ENCODE measurements at regions of chr19 and their contacts with region 1.

Region 1: DNA sequence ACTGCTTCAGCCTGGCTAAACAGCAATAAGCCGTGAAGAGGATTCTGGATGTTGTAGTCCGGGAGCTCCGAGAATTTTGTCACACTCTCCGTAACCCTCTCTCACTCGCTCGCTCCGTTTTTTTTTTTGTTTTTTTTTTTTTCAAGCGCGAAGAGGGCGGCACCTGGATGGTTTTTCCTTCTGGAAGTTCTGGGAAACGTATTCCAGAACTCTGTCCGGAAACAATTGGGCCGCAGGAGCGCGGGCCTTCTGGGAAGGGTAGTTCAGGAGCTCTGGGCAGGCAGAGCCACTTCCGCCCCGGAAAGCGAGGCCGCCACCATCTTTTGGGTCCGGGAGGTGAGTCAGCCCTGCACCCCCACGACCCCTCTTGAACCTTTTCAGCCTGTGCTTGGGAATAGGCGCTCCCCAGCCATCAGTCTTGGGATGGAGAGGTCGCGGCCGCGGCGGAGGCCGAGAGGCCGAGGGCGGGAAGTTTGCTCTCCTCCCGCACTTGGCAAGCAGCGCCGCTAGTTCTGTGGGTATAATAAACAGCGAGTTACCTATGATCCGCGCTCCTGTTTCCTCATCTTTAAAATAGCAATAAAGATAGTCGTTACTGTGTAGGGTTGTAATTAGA is at the start of gene ZNF227:
- DNase-seq: peak; percentile 71 to 97
- H3K4me3 ChIP-seq: peak within 1 kb of the TSS; percentile 70 to 71
- H3K27ac ChIP-seq: peak within 1 kb of the TSS; percentile 73 to 78
- H3K4me1 ChIP-seq: no peaks in the 10 kb centered on the region
- H3K27me3 ChIP-seq: no peaks in the 10 kb centered on the region
- CTCF ChIP-seq: no peak
- total RNA-seq, gene ZNF227: 7.1 TPM

Region 2: DNA sequence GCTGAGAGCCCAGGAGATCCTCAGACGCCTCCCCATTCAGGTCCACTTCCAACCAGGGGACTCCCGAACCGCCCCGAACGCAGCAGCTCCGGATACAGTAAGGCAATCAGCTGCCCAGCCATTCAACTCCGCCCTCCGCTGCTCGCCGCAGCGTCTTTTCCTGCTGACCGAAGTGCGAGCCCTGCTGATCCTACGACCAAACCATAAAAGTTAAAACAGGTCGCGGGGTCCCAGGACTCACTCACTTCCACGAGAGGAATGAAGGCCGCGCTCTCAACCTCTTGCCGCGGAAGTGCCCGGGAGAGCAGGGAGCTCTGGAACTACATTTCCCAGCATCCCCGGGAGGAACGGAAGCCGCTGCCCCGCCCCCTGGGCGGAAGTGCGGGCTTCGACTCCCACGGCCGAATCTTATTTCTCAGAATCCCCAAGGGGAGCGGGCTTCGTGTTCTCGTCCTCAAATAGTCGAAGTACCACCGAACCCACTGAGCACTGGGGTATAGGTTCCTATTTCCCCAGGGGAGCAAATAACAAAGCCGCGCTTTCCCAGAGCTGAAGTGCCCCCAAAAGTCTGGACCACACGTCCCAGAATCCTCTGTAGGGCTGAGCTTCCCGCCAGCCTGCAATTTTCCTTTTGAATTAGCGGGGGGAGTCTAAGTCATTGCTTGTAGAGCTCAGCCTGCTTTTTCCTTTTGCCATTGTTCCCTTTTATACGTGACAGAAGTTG is 277.2 kb before region 1 on chr19 and contains the start of gene ZNF45:
- intact Hi-C with region 1: loop called (anchors 1 kb)
- DNase-seq: peak; percentile 60 to 95
- H3K4me3 ChIP-seq: peak within 1 kb of the TSS; percentile 76 to 93
- H3K27ac ChIP-seq: peak within 1 kb of the TSS; percentile 77 to 82
- H3K4me1 ChIP-seq: peaks cover 4 to 16% of the 10 kb centered on the region in 2 donors
- H3K27me3 ChIP-seq: no peaks in the 10 kb centered on the region
- CTCF ChIP-seq: no peak
- total RNA-seq, gene ZNF45: 6.5 TPM

Region 3: DNA sequence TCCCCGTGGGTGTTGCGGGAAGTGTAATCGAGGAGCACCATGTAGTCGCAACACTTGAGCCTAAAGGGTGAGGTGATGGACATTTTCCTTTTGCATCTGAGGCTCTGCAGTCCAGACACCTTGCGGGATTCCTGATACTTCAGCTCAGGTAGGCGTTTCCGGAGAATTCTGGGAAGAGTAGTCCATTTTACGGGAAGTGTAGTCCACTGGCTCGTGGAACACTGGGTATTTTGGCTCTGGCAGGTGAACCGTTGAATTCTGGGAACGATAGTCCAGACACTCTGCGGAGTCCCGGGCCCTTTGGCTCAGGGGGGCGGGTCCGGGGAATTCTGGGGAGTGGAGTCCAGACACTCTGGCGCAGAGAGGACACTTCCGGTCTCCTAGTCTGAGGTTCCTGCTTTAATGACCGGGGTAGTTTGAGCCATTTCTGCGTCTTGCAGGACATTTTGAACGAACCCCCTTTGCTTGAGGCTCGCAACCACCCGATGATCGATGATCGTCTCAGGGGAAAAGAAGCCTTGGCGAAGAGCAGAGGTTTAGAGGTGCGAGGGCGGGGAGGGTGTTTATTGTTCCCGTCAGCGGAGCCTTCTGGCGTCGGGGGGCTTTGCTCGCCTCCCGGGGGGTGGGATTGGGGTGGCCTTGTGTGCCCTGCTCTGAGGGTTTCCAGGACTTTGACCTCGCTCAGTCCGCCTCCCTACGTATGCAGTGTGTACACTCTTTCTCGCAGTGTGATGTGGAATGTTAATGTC is 160.5 kb before region 1 on chr19 and contains the start of gene ZNF223:
- intact Hi-C with region 1: loop called (anchors 1 kb)
- DNase-seq: peak; percentile 86 to 97
- H3K4me3 ChIP-seq: peak within 1 kb of the TSS; percentile 84 to 86
- H3K27ac ChIP-seq: peak within 1 kb of the TSS; percentile 61 to 71
- H3K4me1 ChIP-seq: peaks cover 4 to 7% of the 10 kb centered on the region in 2 donors
- H3K27me3 ChIP-seq: no peaks in the 10 kb centered on the region
- CTCF ChIP-seq: no peak
- total RNA-seq, gene ZNF223: not detected

Region 4: GRCh38 chr19:44141191-44142058 is 70.9 kb before region 1 on chr19 and contains the start of gene ZNF234:
- intact Hi-C with region 1: no loop called
- DNase-seq: peak; percentile 35 to 88
- H3K4me3 ChIP-seq: peak within 1 kb of the TSS; percentile 69 to 96
- H3K27ac ChIP-seq: peak within 1 kb of the TSS; percentile 59 to 80
- H3K4me1 ChIP-seq: peaks cover 0 to 10% of the 10 kb centered on the region in 2 donors
- H3K27me3 ChIP-seq: no peaks in the 10 kb centered on the region
- CTCF ChIP-seq: no peak
- total RNA-seq, gene ZNF234: 7.9 TPM

Region 5: GRCh38 chr19:44164673-44165512 is 47.5 kb before region 1 on chr19 and contains the start of gene ZNF226:
- intact Hi-C with region 1: loop called (anchors 2 kb)
- DNase-seq: peak; percentile 82 to 96
- H3K4me3 ChIP-seq: peak within 1 kb of the TSS; percentile 63 to 80
- H3K27ac ChIP-seq: peak within 1 kb of the TSS; percentile 88 to 89
- H3K4me1 ChIP-seq: peaks cover 0 to 6% of the 10 kb centered on the region in 2 donors
- H3K27me3 ChIP-seq: no peaks in the 10 kb centered on the region
- CTCF ChIP-seq: no peak
- total RNA-seq, gene ZNF226: 4.7 TPM

Region 6: GRCh38 chr19:44190020-44190419 is 22.3 kb before region 1 on chr19:
- intact Hi-C with region 1: no loop called
- DNase-seq: no peak
- H3K4me3 ChIP-seq: no peak overlapping the region
- H3K27ac ChIP-seq: no peak overlapping the region
- H3K4me1 ChIP-seq: no peaks in the 10 kb centered on the region
- H3K27me3 ChIP-seq: no peaks in the 10 kb centered on the region
- CTCF ChIP-seq: no peak

Region 7: GRCh38 chr19:44356383-44357111 is 144.2 kb after region 1 on chr19 and contains the start of gene ZNF112:
- intact Hi-C with region 1: loop called (anchors 5 kb)
- DNase-seq: peak; percentile 41 to 90
- H3K4me3 ChIP-seq: peak within 1 kb of the TSS; percentile 69 to 73
- H3K27ac ChIP-seq: peak within 1 kb of the TSS; percentile 33 to 56
- H3K4me1 ChIP-seq: peaks cover 0 to 5% of the 10 kb centered on the region in 2 donors
- H3K27me3 ChIP-seq: no peaks in the 10 kb centered on the region
- CTCF ChIP-seq: no peak
- total RNA-seq, gene ZNF112: 0.11 TPM